Sigmoid colon (tissue), 7 donors: ENCODE measurements at regions of chr9 and their contacts with region 1.

Region 1: GRCh38 chr9:112097712-112098688 is 77.1 kb downstream of the SUSD1 start:
- DNase-seq: no peak
- H3K4me3 ChIP-seq: no peak overlapping the region
- H3K27ac ChIP-seq: no peak overlapping the region
- H3K4me1 ChIP-seq: no peaks in the 10 kb centered on the region
- H3K27me3 ChIP-seq: no peaks in the 10 kb centered on the region
- CTCF ChIP-seq: peak; percentile 55 to 85 (median 71)
- EP300 ChIP-seq: no peak
- POLR2A ChIP-seq: no peak

Region 2: DNA sequence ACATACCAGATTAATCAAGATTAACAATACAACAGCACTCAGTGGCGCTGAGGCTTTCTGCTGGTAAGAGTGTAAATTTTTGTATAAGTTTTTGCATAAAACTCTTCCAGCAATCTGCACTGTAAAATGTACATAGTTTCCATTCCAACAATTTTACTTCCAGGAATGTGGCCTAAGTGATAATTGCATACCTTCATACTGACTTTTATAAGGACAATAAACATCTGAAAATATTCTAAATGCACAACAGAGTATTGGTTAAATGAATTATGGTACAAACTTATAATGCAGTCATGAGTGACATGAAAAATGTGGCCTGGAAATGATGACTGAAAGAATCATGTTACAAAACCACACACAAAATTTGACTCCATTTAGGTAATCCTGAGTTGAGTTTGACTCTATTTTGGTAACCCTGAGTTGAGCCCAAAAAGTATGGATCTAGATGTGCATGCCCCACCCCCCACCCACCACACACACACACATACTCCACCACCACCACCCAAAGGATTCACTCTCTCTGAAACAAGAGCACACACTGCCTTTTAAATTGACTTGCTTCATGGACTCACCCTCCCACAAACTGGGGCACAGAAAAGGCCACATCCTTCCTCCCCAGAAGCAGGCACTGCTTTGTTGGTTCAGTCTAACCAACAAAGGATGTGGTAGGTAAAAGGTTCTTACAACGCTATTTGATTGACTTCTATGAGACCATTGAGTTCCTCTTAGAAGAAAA is 60.6 kb before region 1 on chr9:
- intact Hi-C with region 1: loop called (anchors 10 kb)
- DNase-seq: no peak
- H3K4me3 ChIP-seq: no peak overlapping the region
- H3K27ac ChIP-seq: no peak overlapping the region
- H3K4me1 ChIP-seq: peaks cover 0 to 26% (median 15%) of the 10 kb centered on the region in 4 donors
- H3K27me3 ChIP-seq: no peaks in the 10 kb centered on the region
- CTCF ChIP-seq: no peak
- EP300 ChIP-seq: no peak
- POLR2A ChIP-seq: no peak

Region 3: DNA sequence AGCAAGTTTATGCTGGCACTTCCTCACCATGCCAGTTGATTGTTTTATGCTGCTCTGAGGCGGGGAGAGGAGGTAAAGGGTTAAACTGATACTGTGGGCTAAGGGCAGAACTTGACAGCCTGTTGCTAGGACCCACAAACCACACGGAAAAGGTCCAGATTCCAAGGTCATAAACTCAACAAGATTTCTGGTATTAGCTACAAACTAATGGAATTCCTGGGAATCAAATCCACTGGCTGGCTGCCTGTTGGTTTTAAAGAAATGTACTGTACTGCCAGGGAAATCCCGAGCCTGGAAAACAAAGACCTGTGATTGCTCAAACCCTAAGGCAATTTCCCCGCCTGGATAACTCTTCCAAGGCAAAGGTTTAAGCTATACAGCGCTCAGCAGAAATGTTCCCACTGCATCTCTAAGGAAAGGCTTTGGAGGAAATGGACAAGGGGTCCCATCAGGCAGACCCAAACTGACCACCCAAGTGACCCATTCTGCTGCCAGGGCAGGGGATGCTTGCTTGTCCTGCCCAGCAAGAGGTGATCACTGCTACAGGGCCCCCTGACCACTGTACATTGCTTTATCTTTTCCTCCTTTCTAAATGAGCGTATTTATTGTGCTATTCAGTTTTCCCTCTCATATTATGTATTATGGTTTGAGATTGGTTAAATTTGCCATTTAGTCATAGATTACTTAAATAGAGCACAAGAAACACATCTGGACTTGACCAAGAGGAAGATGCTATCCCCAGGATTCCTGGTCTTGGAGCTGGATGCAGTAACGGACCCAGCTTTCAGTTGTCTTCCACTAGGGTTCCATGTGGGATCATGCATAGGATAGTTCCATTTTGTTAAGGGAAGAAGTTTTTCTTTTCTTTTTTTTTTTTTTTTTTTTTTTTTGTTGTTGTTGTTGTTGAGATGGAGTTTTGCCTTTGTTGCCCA is 47.2 kb before region 1 on chr9:
- intact Hi-C with region 1: no loop called
- DNase-seq: peak; percentile 83
- H3K4me3 ChIP-seq: no peak overlapping the region
- H3K27ac ChIP-seq: peak overlapping the region; percentile 40 to 79 (median 62)
- H3K4me1 ChIP-seq: peaks cover 0 to 35% (median 29%) of the 10 kb centered on the region in 4 donors
- H3K27me3 ChIP-seq: no peaks in the 10 kb centered on the region
- CTCF ChIP-seq: no peak
- EP300 ChIP-seq: peak in 1 of 4 donors; percentile 29
- POLR2A ChIP-seq: no peak

Region 4: DNA sequence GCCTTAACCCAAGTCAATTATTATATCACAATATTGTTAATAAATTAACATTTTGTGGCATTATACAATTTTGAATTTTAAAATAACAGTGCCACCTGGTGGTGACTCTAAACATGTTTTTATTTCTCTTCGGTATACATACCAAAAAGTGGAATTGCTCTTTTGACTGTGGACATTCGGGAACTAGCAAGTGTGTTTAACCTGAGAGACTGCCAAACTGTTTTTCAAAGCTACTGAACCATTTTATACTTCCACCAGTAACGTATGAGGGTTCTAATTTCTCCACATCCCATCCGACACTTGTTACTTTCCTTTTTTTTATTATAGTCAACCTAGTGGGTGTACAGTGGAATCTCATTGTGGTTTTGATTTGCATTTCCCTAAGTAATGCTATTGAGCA is 263.6 kb after region 1 on chr9:
- intact Hi-C with region 1: loop called (anchors 1 kb)
- DNase-seq: no peak
- H3K4me3 ChIP-seq: no peak overlapping the region
- H3K27ac ChIP-seq: no peak overlapping the region
- H3K4me1 ChIP-seq: no peaks in the 10 kb centered on the region
- H3K27me3 ChIP-seq: no peaks in the 10 kb centered on the region
- CTCF ChIP-seq: peak; percentile 23 to 64 (median 46)
- EP300 ChIP-seq: no peak
- POLR2A ChIP-seq: no peak

Region 5: DNA sequence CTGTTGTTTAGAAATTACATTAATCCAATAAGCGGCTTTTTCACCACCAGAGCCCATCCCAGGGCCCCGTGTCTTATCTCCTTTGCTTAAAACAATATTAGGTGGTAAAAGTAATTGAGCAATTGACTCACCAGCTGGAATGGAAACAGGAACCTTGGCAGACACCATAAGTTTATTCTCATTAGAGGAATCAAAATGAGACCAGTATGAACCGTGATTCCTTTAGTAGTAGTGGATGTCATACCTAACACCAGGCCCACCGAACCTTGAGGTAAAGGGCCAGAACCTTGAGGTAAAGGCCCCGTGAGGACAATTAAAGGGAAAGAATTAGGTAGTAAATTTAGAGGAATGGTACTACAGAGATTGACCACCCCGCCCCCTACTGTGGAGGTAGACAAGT is 298.4 kb after region 1 on chr9:
- intact Hi-C with region 1: no loop called
- DNase-seq: no peak
- H3K4me3 ChIP-seq: no peak overlapping the region
- H3K27ac ChIP-seq: no peak overlapping the region
- H3K4me1 ChIP-seq: no peaks in the 10 kb centered on the region
- H3K27me3 ChIP-seq: no peaks in the 10 kb centered on the region
- CTCF ChIP-seq: no peak
- EP300 ChIP-seq: no peak
- POLR2A ChIP-seq: no peak